Esophagus squamous epithelium (tissue), 5 donors: ENCODE measurements at regions of chr6 and their contacts with region 1.

Region 1: DNA sequence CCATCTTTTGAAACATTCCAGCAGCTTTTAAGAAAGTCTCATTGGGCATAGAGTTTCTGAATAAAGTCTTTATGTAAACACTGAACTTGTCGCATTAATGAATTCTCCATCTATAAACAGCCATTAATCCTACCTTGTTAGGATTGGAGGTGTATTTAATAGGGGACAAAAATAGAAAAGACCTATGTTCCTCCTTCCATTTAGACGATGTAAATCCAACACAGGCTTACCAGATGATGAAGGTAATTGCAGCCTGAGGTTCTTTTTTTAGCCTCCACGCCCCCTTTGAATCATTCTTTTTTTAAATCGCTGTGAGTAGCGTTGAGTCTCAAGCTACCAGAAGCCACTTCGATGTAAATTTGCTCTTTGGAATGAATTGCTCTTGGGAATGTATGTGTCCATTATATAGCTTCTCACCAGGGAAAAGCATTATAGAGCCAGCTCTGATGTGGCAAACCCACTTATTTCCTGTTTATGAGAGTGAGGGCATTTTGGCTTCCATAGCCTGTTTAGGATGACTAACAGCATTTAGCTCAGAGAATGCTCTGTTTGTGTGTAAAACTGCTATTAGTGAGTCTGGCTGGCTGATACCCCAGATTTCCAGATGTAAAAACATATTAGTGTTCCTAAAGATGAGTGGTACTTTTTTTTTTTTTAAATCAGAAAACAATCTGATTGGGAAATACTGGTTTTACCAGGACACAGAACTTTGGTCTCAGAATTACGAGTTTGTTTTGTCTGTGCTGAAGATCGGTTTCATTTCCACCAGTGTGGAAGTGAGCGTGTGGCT is 74.9 kb upstream of the CLDN20 start:
- DNase-seq: no peak
- H3K4me3 ChIP-seq: peak overlapping the region in 3 of 4 donors; percentile 4 to 47 (median 10)
- H3K27ac ChIP-seq: peak overlapping the region; percentile 41 to 76 (median 69)
- H3K4me1 ChIP-seq: peaks cover 0 to 50% (median 6%) of the 10 kb centered on the region in 3 donors
- H3K27me3 ChIP-seq: no peaks in the 10 kb centered on the region
- CTCF ChIP-seq: no peak
- POLR2A ChIP-seq: no peak

Region 2: GRCh38 chr6:154962753-154963152 is 226.1 kb before region 1 on chr6:
- intact Hi-C with region 1: no loop called
- DNase-seq: no peak
- H3K4me3 ChIP-seq: no peak overlapping the region
- H3K27ac ChIP-seq: no peak overlapping the region
- H3K4me1 ChIP-seq: peaks cover 0 to 10% (median 5%) of the 10 kb centered on the region in 3 donors
- H3K27me3 ChIP-seq: no peaks in the 10 kb centered on the region
- CTCF ChIP-seq: no peak
- POLR2A ChIP-seq: no peak

Region 3: DNA sequence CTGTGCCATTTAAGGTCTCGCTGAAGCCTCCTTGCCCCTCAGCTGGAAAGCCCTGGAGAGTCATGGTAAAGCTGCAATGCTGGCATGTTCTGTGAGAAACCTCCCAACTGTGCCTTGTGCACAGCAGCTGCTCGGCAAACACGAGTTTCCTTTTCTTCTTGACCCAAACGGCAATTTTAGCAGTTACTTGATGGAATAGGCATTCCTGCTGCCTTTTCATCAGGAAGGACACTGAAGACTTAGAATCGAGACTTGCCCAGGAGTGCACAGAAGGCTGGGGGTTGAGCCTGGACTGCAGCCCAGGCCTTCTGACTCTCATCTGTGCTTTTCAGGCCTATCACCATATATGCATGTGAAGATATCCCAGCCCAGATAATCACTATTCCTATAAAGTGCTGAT is 46.2 kb after region 1 on chr6:
- intact Hi-C with region 1: loop called (anchors 5 kb)
- DNase-seq: no peak
- H3K4me3 ChIP-seq: no peak overlapping the region
- H3K27ac ChIP-seq: peak overlapping the region in 3 of 4 donors; percentile 14 to 38 (median 19)
- H3K4me1 ChIP-seq: no peaks in the 10 kb centered on the region
- H3K27me3 ChIP-seq: no peaks in the 10 kb centered on the region
- CTCF ChIP-seq: no peak
- POLR2A ChIP-seq: no peak